ENCODE measurements at regions of chr11 and their contacts with region 1.

Region 1: DNA sequence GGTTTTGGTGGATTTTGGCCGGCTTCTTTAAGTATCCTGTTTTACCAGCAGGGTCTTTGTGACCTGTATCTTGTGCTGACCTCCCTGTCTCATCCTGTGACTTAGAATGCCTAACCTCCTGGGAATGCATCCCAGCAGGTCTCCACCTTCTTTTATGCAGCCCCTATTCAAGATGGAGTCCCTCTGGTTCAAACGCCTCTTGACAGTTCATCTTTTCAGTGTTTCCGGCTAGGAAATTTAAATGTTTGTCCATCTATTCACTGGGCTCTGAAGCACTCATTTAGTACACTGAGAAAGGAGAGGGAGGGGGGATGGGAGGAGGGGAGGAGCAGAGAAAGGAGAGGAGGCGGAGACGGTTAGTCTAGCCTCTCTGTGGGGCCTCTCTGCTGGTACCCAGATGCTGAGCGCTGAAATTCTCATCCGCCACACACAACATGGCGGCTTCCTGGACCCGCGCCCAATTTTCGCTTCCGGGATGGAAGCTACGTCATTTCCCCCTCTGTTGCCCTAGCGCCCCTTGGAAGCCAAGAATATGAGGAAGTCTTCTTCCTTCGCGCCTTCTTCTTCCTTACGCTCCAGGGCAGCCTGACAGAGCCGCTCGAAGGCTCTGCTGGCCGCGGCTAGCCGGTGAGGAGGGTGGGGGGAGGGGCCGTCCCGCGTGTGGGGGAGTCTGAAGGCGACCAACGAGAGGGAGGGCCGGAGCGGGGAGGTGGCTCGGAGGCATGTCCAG is 69.0 kb upstream of the SYT13 start:
- DNase-seq: peak; percentile 93
- H3K4me3 Mint-ChIP-seq: peak overlapping the region; percentile 76
- H3K27ac Mint-ChIP-seq: peak overlapping the region; percentile 47
- H3K4me1 Mint-ChIP-seq: peaks cover 17% of the 10 kb centered on the region
- H3K27me3 Mint-ChIP-seq: no peaks in the 10 kb centered on the region

Region 2: DNA sequence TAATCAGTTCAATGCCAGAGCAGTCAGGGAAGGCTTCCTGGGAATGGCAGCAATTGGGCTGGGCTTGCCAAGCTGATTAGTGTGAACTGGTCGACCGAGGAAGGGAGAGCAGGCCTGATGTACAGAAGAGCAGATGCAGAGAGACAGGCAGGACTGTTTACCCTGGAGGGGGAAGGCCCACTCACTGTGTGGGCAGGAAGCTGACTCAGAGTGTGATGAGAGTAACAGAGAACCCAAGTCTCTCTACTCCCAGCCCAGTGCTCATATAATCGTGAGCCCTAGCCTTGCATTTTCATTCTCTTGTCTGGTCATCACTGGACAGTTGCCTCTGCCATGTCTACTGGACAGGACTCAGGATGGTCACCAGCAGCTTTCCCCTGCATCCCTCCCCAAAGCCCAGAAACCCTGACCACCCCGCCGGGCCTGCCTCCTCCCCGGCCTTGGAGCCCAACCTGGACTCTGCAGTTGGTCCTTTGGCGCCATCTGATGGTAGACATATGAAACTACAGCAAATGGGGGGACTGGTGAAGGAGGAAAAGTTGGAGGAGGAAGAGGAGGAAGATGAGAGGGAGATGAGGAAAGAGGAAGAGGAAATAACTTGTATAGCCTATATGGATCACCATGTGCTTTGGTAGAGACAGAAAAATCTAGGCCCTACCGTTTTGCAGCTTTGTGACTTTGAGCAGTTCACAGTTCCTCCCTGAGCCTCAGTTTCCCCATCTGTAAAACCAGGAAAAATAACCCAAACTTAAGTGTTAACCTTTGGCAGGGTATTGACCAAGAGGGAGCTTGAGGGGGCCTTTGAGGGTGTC is 252.1 kb before region 1 on chr11:
- CTCF ChIA-PET with region 1: no interaction called
- POLR2A ChIA-PET with region 1: no interaction called
- intact Hi-C with region 1: no loop called
- DNase-seq: peak; percentile 86
- H3K4me3 Mint-ChIP-seq: peak overlapping the region; percentile 66
- H3K27ac Mint-ChIP-seq: peak overlapping the region; percentile 68
- H3K4me1 Mint-ChIP-seq: peaks cover 12% of the 10 kb centered on the region
- H3K27me3 Mint-ChIP-seq: peaks cover 12% of the 10 kb centered on the region

Region 3: GRCh38 chr11:45339729-45340519 is 15.2 kb before region 1 on chr11:
- CTCF ChIA-PET with region 1: interaction called, 15 read pairs
- POLR2A ChIA-PET with region 1: no interaction called
- intact Hi-C with region 1: loop called (anchors 1 kb)
- DNase-seq: peak; percentile 95
- H3K4me3 Mint-ChIP-seq: peak overlapping the region; percentile 62
- H3K27ac Mint-ChIP-seq: no peak overlapping the region
- H3K4me1 Mint-ChIP-seq: peaks cover 16% of the 10 kb centered on the region
- H3K27me3 Mint-ChIP-seq: peaks cover 11% of the 10 kb centered on the region